GM13976 (cell line): ENCODE measurements at regions of chr20 and their contacts with region 1.

Region 1: GRCh38 chr20:50790651-50791277 is 4.1 kb upstream of the BCAS4 start:
- DNase-seq: peak; percentile 93
- CTCF ChIP-seq: peak; percentile 91

Region 2: DNA sequence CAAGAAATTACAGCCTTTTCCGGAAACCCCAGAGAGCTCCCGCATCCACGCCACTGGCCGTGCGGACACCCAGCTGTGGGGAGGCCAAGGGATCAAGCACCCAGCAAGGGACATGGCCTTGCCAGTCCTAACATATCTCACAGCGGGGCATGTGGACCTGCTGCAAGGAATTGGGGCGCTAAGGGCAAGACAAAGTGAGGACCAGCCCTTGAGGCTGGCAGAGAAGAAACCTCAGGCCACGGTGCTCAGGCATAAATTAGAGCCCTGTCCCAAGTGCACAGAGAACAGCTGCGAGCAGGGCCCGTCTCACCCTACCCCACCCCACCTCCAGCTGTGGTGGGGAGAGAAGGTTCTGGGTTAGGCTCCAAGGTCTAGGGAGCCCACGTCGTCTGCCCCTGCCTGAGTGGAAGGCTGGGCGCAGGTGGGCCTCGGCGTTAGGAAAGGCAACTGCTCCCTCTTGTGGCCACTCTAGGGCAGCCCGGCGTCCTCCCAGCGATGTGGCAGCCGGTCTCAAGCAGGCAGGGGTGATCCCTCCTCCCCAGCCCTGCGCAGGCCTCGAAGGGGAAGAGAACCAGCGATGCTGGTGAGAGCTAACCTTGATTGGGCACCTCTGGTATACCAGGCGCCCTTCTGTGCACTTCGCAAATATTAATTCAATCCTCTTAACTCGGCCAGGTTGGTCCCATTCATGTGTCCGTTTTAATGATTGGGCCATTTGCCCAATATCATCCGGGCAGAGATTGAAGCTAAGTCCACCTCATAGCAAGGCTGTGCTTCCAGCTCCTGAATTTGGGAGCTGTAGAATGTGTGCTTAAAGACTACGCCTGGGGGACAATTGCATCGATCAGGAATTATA is 516.0 kb after region 1 on chr20:
- in situ Hi-C with region 1: loop called (anchors 25 kb)
- DNase-seq: peak; percentile 90
- CTCF ChIP-seq: peak; percentile 94